HAP-1 (cell line): ENCODE measurements at regions of chr20 and their contacts with region 1.

Region 1: DNA sequence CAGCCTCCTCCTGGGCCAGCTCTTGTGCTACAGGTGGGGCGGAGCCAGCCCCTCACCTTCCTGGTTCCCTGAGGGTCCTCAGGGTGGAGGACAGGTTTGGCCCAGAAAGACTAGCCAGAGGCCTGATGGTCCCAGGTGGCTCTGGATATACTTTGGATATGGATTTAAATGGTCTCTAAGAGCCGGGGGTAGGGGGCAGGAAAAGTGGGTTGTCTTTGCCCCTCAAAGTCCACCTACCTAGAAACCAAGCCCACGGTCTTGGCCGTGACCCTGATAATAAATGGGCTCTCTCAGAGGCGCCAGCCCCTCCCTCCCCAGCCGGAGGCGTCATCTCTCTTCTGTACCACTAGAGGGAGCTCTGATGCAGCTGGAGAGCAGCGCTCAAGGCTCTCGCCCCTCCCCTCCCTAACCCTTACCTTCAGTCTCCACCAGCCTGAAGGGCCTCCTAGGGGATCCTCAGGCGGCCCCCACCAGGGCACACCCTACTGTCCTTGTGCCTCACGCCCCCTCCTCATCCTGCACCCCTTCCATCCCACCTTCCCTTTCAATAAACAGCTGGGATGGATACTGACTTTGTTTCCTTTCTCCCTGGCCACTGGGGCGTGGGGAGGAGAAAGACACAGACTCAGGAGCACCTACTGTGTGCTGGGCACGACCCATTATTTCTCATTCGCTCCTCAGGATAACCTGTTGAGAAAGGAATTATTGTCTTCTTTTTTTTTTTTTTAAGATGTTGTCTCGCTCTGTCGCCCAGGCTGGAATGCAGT is 7.6 kb downstream of the NRSN2 start:
- DNase-seq: peak; percentile 85
- H3K4me3 ChIP-seq: no peak overlapping the region
- H3K4me1 ChIP-seq: no peaks in the 10 kb centered on the region
- H3K27me3 ChIP-seq: no peaks in the 10 kb centered on the region

Region 2: DNA sequence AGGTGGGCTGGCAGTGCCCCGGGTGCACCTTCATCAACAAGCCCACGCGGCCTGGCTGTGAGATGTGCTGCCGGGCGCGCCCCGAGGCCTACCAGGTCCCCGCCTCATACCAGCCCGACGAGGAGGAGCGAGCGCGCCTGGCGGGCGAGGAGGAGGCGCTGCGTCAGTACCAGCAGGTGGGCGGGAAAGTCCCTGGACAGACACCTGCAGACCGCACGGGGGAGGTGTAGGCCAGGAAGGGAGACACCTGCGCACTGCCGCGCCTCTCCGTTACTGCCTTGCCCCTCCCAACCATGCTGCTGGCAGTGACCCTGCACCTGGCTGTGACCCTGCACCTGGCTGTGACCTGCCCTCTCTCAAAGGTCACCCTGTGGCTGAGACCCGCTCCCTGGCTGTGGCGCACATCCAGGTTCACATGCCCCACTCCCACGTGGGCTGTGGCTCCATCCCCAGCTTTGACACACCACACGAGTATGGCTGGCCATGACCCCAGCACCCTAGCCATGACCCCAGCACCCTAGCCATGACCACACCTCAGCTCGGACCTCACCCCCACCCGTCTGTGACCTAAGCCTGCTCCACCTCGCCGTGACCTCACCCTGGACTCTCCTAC is 65.2 kb after region 1 on chr20:
- in situ Hi-C with region 1: no loop called
- DNase-seq: peak in 1 of 2 experiments; percentile 5
- H3K4me3 ChIP-seq: no peak overlapping the region
- H3K4me1 ChIP-seq: no peaks in the 10 kb centered on the region
- H3K27me3 ChIP-seq: no peaks in the 10 kb centered on the region

Region 3: DNA sequence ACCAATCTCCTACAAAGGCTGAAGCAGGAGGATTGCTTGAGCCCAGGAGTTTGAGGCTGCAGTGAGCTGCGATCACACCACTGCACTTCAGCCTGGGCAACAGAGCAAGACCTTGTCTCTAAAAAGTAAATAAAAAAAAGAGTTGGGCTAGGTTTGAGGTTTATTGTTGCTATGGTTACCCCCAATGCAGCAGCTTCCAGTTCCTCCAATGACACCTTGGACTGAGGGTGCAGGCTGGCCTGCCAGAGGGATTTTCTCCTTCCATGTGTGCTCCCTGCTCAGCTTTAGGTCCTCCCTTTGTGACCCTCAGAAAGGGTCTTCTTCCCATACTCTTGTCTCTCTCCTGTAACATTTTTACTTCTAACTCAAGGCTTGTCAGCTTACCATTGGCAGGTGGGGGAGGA is 118.4 kb after region 1 on chr20:
- in situ Hi-C with region 1: loop called (anchors 5 kb)
- DNase-seq: no peak
- H3K4me3 ChIP-seq: no peak overlapping the region
- H3K4me1 ChIP-seq: no peaks in the 10 kb centered on the region
- H3K27me3 ChIP-seq: no peaks in the 10 kb centered on the region

Region 4: DNA sequence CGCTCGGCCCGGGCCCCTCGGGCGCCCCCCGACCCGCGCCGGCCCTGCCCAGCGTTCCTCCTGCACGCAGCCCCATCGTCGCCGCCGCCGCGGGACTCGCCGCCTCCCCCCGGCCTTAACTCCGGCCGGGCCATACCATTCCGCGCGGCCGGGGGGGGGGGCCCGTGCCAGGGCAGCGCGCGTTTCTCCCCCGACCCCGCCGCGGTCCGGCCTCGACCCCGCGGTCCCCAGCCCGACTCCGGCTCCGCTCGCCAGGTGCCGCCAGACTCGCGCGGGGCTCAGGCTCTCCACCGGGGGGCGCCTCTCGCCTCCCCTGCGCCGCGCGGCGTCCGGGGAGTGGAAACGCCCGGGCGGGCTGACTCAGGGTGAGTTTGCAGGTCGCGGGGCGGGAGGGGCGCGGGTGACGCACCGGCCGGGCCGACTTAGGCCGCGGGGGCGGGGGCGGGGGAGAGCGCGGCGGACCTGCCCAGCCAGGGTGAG is 298.7 kb after region 1 on chr20 and contains the start of gene SRXN1:
- in situ Hi-C with region 1: loop called (anchors 5 kb)
- DNase-seq: peak; percentile 74 to 93
- H3K4me3 ChIP-seq: peak within 1 kb of the TSS; percentile 62
- H3K4me1 ChIP-seq: peaks cover 6% of the 10 kb centered on the region
- H3K27me3 ChIP-seq: no peaks in the 10 kb centered on the region

Region 5: DNA sequence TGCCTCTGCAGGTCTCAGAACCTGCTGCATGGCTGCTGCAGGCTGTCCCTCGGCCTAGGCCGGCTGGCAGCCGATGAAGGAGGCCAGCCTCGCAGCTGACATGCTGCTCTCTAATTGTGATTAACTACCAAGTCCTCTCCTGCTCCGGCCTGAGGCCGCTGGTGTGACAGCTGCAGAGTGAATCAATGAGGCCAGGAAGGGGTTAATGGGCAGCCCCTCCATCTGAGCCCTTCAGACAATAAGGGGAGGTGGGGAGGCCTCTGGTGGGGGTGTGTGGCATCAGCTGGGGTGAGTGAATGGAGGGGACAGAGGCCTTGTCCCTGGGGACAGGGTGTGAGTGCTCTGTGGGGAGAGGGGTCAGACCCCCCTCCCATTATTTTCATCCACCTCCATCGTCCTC is 379.4 kb after region 1 on chr20:
- in situ Hi-C with region 1: loop called (anchors 10 kb)
- DNase-seq: no peak
- H3K4me3 ChIP-seq: no peak overlapping the region
- H3K4me1 ChIP-seq: no peaks in the 10 kb centered on the region
- H3K27me3 ChIP-seq: no peaks in the 10 kb centered on the region